Endothelial cell of umbilical vein (primary cell): ENCODE measurements at regions of chr2 and their contacts with region 1.

Region 1: GRCh38 chr2:189661148-189661956 is at the start of gene ASNSD1:
- DNase-seq: peak; percentile 100
- H3K4me3 ChIP-seq: peak within 1 kb of the TSS; percentile 59 to 95 (median 87)
- H3K27ac ChIP-seq: peak within 1 kb of the TSS; percentile 76
- H3K4me1 ChIP-seq: peaks cover 10% of the 10 kb centered on the region
- H3K27me3 ChIP-seq: peaks cover 0 to 2% of the 10 kb centered on the region in 2 experiments
- CTCF ChIP-seq: peak; percentile 82 to 94
- POLR2A ChIP-seq: peak; percentile 96
- total RNA-seq, gene ASNSD1: 39.5 and 41.9 TPM in 2 replicates

Region 2: DNA sequence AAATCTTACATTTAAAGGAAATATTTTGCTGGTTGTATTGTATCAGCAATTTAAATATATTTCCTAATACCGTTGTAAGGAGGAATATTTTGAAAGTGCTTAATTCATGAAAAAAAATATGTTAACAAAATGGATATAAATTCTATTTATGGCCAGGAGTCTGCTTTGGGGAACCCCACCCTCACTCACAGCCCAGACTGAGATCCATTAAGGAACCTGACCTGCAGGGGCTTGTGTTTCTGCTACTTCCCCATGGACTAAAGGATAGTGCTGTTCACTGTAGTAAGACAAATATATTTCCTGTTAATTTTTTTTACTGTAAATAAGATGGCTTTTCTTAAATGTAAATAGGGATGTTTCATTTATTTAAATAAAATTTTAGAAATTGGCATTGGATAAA is 909.0 kb before region 1 on chr2:
- CTCF ChIA-PET with region 1: no interaction called
- POLR2A ChIA-PET with region 1: no interaction called
- dilution Hi-C with region 1: no loop called
- intact Hi-C with region 1: no loop called
- DNase-seq: no peak
- H3K4me3 ChIP-seq: no peak overlapping the region
- H3K27ac ChIP-seq: no peak overlapping the region
- H3K4me1 ChIP-seq: no peaks in the 10 kb centered on the region
- H3K27me3 ChIP-seq: no peaks in the 10 kb centered on the region
- CTCF ChIP-seq: no peak
- POLR2A ChIP-seq: no peak

Region 3: DNA sequence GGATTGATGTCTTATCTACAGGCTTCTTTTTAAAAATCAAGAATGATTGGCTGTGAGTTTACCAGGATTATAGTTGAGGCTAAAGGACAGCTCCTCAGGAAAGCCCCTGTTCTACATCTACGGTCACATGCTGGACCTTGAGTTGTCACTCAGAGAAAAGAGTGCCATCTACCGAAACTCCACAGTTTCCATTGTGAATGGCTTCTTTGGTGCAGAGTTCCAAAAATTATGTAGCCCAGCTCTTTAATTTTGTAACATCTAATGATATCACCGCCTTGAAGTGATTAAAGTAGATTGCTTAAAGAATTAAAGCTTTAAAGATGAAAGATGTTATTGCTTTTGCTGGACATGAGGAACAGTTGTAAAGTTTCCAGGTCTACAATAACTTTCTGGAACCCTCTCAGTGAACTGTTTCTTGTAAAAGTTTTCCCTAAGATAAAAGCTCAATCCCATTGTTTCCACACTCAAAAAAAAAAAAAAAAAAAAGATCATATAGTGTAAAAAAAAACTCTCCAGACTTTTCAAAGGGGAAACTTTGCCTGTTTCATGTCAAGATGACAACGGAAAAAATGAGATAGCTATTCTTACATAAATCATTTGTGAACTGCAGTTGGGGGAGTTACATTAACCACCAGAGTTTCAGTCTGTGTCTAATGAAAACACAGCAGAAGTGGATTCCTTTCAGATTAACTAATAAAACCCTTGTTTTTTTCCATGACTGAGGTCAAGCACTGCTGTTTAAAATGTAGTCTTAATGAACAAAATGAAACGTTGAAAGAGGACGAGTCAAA is 682.9 kb before region 1 on chr2:
- CTCF ChIA-PET with region 1: no interaction called
- POLR2A ChIA-PET with region 1: no interaction called
- dilution Hi-C with region 1: no loop called
- intact Hi-C with region 1: no loop called
- DNase-seq: peak; percentile 86
- H3K4me3 ChIP-seq: peak overlapping the region in 1 of 3 experiments; percentile 13
- H3K27ac ChIP-seq: peak overlapping the region; percentile 12
- H3K4me1 ChIP-seq: peaks cover 23% of the 10 kb centered on the region
- H3K27me3 ChIP-seq: no peaks in the 10 kb centered on the region
- CTCF ChIP-seq: peak; percentile 16 to 25
- POLR2A ChIP-seq: no peak

Region 4: DNA sequence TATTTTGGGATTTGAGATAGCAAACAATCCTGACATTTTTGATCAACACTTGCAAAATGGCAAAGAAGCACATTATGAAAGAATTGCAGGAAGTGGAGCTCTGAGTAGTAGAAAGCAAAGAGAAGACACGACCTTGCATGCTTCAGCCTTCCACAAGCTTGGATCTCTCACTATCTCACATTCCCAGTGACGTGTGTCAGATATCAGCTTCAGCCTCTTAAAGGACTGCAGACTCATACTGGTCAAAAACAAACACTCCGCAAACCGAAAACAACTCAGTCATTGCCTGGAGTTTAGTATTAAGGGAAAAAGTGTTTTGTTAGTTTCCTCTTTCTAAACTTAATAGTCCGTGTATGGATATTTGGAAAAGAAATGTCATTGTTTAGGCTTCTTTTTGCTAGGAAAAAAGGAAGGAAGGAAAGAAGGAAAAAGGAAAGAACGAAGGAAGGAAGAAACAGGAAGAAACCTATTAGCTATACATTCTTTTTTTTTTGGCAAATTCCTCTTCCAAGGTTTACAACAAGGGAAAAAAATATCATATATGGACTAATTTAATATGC is 48.2 kb before region 1 on chr2:
- CTCF ChIA-PET with region 1: interaction called, 13 read pairs
- POLR2A ChIA-PET with region 1: no interaction called
- dilution Hi-C with region 1: no loop called
- intact Hi-C with region 1: no loop called
- DNase-seq: peak; percentile 98
- H3K4me3 ChIP-seq: peak overlapping the region in 2 of 3 experiments; percentile 12 to 66
- H3K27ac ChIP-seq: peak overlapping the region; percentile 74
- H3K4me1 ChIP-seq: peaks cover 17% of the 10 kb centered on the region
- H3K27me3 ChIP-seq: no peaks in the 10 kb centered on the region
- CTCF ChIP-seq: no peak
- POLR2A ChIP-seq: peak; percentile 42

Region 5: GRCh38 chr2:189674374-189675112 is 13.2 kb after region 1 on chr2 and contains the start of gene ANKAR:
- CTCF ChIA-PET with region 1: interaction called, 42 read pairs
- POLR2A ChIA-PET with region 1: no interaction called
- dilution Hi-C with region 1: no loop called
- intact Hi-C with region 1: loop called (anchors 1 kb)
- DNase-seq: peak; percentile 95
- H3K4me3 ChIP-seq: peak within 1 kb of the TSS; percentile 54 to 92 (median 92)
- H3K27ac ChIP-seq: peak within 1 kb of the TSS; percentile 95
- H3K4me1 ChIP-seq: peaks cover 14% of the 10 kb centered on the region
- H3K27me3 ChIP-seq: no peaks in the 10 kb centered on the region
- CTCF ChIP-seq: peak; percentile 91 to 99
- POLR2A ChIP-seq: peak; percentile 95
- total RNA-seq, gene ANKAR: 4.3 and 4.5 TPM in 2 replicates

Region 6: GRCh38 chr2:189751080-189751658 is 89.8 kb after region 1 on chr2:
- CTCF ChIA-PET with region 1: interaction called, 10 read pairs
- POLR2A ChIA-PET with region 1: no interaction called
- dilution Hi-C with region 1: no loop called
- intact Hi-C with region 1: loop called (anchors 2 kb)
- DNase-seq: peak; percentile 40
- H3K4me3 ChIP-seq: no peak overlapping the region
- H3K27ac ChIP-seq: no peak overlapping the region
- H3K4me1 ChIP-seq: no peaks in the 10 kb centered on the region
- H3K27me3 ChIP-seq: no peaks in the 10 kb centered on the region
- CTCF ChIP-seq: peak; percentile 52 to 59
- POLR2A ChIP-seq: no peak

Region 7: GRCh38 chr2:189783927-189784867 is 122.8 kb after region 1 on chr2 and contains the starts of genes ORMDL1 and PMS1:
- CTCF ChIA-PET with region 1: interaction called, 6 read pairs
- POLR2A ChIA-PET with region 1: no interaction called
- dilution Hi-C with region 1: no loop called
- intact Hi-C with region 1: loop called (anchors 1 kb)
- DNase-seq: peak; percentile 98
- H3K4me3 ChIP-seq: peak within 1 kb of the TSS; percentile 73 to 95 (median 87)
- H3K27ac ChIP-seq: peak within 1 kb of the TSS; percentile 71
- H3K4me1 ChIP-seq: peaks cover 16% of the 10 kb centered on the region
- H3K27me3 ChIP-seq: no peaks in the 10 kb centered on the region
- CTCF ChIP-seq: no peak
- POLR2A ChIP-seq: peak; percentile 92
- total RNA-seq, gene ORMDL1: 58.0 and 63.3 TPM in 2 replicates
- total RNA-seq, gene PMS1: 27.8 and 28.4 TPM in 2 replicates

Region 8: DNA sequence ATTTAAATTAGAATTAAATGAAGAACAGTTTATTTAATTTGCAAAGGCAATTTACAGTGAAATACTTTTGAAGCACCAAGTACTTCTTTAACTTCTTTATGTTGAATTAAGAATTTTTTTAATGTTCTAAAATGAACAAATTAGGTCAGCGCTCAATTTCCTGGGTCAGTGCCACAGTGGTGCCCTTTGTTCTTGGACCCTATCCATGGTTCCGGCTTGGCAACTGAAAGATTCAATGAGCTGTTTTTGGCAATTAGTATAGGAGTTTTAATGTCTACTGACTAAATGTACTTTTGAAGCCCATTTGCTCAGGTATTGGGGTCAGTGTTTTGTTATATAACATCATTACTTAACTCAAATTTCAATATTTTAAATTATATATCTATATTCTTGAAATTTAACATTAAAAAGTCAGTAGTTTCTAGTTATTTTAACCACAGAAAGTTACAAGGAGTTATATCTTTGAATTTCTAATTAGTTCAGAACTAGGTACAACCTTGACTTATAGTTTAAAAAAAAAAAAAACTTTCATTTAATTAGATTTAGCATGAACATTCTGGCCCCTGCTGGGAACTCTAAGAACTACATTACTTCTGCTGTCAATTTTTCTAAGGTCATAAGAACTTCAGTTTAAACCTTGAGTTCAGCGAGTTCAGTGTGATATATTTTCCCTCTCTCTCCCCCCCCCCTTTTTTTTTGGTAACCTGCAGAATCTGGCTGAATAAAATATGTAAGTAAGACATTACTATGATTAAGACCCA is 408.8 kb after region 1 on chr2:
- CTCF ChIA-PET with region 1: interaction called, 30 read pairs
- POLR2A ChIA-PET with region 1: no interaction called
- dilution Hi-C with region 1: no loop called
- intact Hi-C with region 1: loop called (anchors 1 kb)
- DNase-seq: peak; percentile 70
- H3K4me3 ChIP-seq: no peak overlapping the region
- H3K27ac ChIP-seq: no peak overlapping the region
- H3K4me1 ChIP-seq: no peaks in the 10 kb centered on the region
- H3K27me3 ChIP-seq: no peaks in the 10 kb centered on the region
- CTCF ChIP-seq: peak; percentile 17 to 35
- POLR2A ChIP-seq: no peak